ENCODE measurements at regions of chr15 and their contacts with region 1.

Region 1: GRCh38 chr15:81375461-81375860 is 1.4 kb upstream of the TMC3 start:
- DNase-seq: no peak
- H3K4me3 ChIP-seq: no peak overlapping the region
- H3K27ac ChIP-seq: no peak overlapping the region
- H3K4me1 ChIP-seq: no peaks in the 10 kb centered on the region
- H3K27me3 ChIP-seq: no peaks in the 10 kb centered on the region
- CTCF ChIP-seq: no peak
- POLR2A ChIP-seq: no peak

Region 2: GRCh38 chr15:81108427-81108826 is 267.0 kb before region 1 on chr15:
- intact Hi-C with region 1: no loop called
- DNase-seq: no peak
- H3K4me3 ChIP-seq: no peak overlapping the region
- H3K27ac ChIP-seq: no peak overlapping the region
- H3K4me1 ChIP-seq: no peaks in the 10 kb centered on the region
- H3K27me3 ChIP-seq: peaks cover under 1% of the 10 kb centered on the region
- CTCF ChIP-seq: peak; percentile 14 to 45 (median 24)
- POLR2A ChIP-seq: no peak

Region 3: DNA sequence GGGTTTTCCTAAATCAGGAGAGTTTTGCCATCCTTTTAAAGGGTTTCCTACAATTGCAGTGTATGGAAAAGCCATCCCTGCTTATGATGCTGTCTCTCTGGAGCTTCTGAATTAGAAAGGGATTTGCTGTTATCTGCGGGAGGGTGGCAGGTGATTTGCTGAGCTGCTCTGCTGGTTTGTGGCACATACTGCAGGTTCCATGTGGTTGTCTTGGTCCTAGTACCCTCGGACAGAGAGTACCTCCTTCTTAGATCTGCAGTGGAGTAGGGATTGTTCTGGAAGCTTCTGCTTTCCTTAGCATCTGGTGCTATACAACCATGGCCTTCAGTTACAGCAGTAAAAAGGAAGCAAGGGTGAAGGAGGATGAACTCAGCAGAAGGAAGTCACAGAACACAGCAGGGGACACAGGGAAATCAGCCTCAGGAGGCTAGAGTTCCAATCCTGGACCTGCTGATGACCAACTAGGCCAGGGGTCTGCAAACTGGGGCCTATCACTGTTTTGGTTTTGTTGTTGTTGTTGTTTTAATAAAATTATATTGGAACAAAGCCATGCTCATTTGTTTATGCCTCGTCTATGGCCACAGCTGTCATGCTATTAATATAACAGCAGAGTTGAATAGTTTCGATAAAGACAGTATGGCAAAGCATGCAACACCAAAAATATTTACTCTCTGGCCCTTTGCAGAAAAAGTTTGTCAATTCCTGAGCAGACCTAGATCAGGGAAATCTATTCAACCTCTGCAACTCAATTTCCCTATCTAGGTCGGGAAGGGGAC is 91.0 kb before region 1 on chr15:
- intact Hi-C with region 1: loop called in 1 of 2 experiments (anchors 5 kb)
- DNase-seq: peak in 1 of 7 donors; percentile 23
- H3K4me3 ChIP-seq: no peak overlapping the region
- H3K27ac ChIP-seq: peak overlapping the region in 1 of 5 donors; percentile 20
- H3K4me1 ChIP-seq: no peaks in the 10 kb centered on the region
- H3K27me3 ChIP-seq: peaks cover 3% of the 10 kb centered on the region
- CTCF ChIP-seq: no peak
- POLR2A ChIP-seq: no peak